ENCODE measurements at regions of chr6 and their contacts with region 1.

Region 1: GRCh38 chr6:116561377-116562018 is 7.9 kb downstream of the CALHM4 start:
- DNase-seq: peak; percentile 75 to 78
- H3K4me3 ChIP-seq: no peak overlapping the region
- H3K27ac ChIP-seq: no peak overlapping the region
- H3K4me1 ChIP-seq: no peaks in the 10 kb centered on the region
- H3K27me3 ChIP-seq: no peaks in the 10 kb centered on the region
- CTCF ChIP-seq: peak; percentile 76 to 89 (median 86)
- POLR2A ChIP-seq: no peak

Region 2: GRCh38 chr6:116279260-116280063 is 282.0 kb before region 1 on chr6 and contains the start of gene TSPYL1:
- intact Hi-C with region 1: loop called (anchors 10 kb)
- DNase-seq: peak; percentile 97
- H3K4me3 ChIP-seq: peak within 1 kb of the TSS; percentile 77 to 87 (median 82)
- H3K27ac ChIP-seq: peak within 1 kb of the TSS; percentile 97 to 99 (median 98)
- H3K4me1 ChIP-seq: peaks cover 40 to 42% of the 10 kb centered on the region in 2 donors
- H3K27me3 ChIP-seq: no peaks in the 10 kb centered on the region
- CTCF ChIP-seq: peak in 1 of 6 experiments; percentile 15
- POLR2A ChIP-seq: peak; percentile 70 to 99
- total RNA-seq, gene TSPYL1: 87.6 to 169 (median 123) TPM

Region 3: GRCh38 chr6:116314878-116315277 is 246.6 kb before region 1 on chr6:
- intact Hi-C with region 1: no loop called
- DNase-seq: no peak
- H3K4me3 ChIP-seq: no peak overlapping the region
- H3K27ac ChIP-seq: no peak overlapping the region
- H3K4me1 ChIP-seq: peaks cover 0 to 5% of the 10 kb centered on the region in 2 donors
- H3K27me3 ChIP-seq: no peaks in the 10 kb centered on the region
- CTCF ChIP-seq: no peak
- POLR2A ChIP-seq: no peak

Region 4: DNA sequence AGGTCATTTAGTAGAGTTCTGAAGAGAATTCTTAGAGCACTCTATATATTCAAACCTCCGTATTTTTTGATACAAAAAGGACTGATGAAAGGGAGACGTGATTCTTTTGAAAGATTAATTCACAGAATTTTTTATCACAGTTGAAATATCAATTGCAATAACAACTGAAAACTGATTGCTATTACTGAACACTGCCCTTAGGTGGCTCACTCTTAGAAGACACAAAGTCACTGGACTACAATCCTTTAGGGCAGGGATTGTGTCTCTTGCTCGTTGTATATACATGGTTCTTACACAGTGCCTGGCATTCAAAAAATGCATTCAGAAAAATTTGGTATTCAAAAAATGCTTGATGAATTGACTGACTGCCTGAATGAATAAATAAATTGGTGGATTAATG is 117.4 kb before region 1 on chr6:
- intact Hi-C with region 1: loop called (anchors 5 kb)
- DNase-seq: no peak
- H3K4me3 ChIP-seq: no peak overlapping the region
- H3K27ac ChIP-seq: no peak overlapping the region
- H3K4me1 ChIP-seq: peaks cover 0 to 7% of the 10 kb centered on the region in 2 donors
- H3K27me3 ChIP-seq: no peaks in the 10 kb centered on the region
- CTCF ChIP-seq: peak in 3 of 6 experiments; percentile 39 to 59 (median 46)
- POLR2A ChIP-seq: no peak

Measured in thyroid gland (tissue), 4 donors.